ENCODE measurements at regions of chr1 and their contacts with region 1.

Region 1: DNA sequence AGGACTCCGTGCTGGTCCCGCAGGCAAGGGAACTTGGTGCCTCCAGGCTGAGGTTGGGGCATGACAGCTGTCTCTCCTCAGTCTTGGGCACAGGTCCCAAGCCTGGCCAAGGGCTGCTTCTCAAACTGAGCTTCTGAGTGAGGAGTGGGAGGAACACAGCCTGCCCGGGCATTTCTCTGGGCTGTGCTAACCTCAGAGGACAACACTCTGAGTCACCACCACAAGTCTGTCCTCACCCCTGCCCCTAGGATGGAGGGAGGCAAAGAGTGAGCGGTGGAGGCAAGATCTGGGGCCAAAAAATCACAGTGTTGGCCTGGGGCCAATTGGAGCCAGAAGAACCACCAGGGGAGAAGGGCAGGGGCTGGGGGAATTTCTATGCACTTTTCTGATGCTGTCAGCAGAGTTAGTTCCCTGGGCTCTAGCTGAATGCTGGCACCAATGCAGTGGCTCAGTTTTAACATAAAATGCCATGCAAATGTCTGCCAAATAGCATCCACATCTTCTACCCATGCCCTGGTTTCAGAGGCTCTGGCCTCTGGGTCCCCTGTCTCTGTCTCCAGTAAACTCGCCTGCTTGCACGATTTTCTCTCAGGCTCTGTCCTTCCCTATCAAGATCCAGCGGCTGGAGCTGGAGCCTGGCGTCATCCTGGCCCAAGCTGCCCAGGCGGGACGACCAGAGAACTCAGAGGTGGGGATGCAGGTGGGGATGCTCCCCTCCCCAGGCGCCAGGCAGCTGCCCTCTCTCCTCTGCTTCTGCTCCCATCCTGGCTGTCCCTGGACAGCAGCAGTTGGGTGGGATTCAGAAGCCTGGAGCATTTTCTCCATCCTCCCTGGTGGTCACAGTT is 11.0 kb upstream of the CDK18 start:
- DNase-seq: no peak
- H3K4me3 ChIP-seq: no peak overlapping the region
- H3K27ac ChIP-seq: no peak overlapping the region
- H3K4me1 ChIP-seq: peaks cover 10 to 23% (median 16%) of the 10 kb centered on the region in 4 experiments
- H3K27me3 ChIP-seq: no peaks in the 10 kb centered on the region
- CTCF ChIP-seq: no peak
- EP300 ChIP-seq: no peak
- POLR2A ChIP-seq: no peak
- RAD21 ChIP-seq: no peak

Region 2: DNA sequence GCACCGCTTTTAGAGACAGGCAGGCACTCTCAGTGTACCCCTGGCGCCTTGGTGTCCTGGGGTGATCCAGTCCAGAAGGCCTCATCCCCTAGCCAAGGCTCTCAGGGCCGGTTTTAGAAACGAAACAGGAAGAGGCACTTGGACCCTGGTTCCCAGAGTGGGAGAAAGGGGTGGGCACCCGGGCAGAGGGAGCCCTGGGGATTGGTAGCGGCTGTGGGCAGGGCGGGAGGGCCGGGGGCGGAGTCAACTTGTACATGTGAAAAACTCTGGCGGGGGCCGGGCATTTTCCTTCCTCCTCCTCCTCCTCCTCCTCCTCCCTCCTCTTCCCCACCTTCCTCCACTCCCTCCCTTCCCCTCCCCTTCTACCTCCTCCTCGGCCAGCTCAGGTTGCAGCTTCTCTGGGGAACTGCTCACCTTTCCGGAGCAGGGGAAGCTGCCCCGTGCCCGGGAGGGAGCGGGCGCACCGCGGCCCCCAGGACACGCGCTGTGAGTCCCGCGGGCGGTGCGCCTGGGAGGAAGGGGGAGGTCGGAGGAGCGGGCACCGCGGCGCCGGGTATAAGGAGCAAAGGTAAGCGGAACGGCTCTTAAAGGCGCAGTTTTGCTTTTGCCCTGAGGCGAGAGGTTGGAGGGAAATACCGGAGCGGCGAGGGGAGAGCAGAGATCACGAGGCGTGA is 11.0 kb after region 1 on chr1 and contains the start of gene CDK18:
- CTCF ChIA-PET with region 1: interaction called, 1,626 read pairs
- POLR2A ChIA-PET with region 1: interaction called, 22 read pairs
- DNase-seq: peak; percentile 69 to 85
- H3K4me3 ChIP-seq: peak within 1 kb of the TSS; percentile 44 to 88 (median 86)
- H3K27ac ChIP-seq: peak within 1 kb of the TSS; percentile 49; the same call in 1 of the 2 replicates
- H3K4me1 ChIP-seq: peaks cover 0 to 29% (median 16%) of the 10 kb centered on the region in 4 experiments; a peak in 6 of 7 replicates
- H3K27me3 ChIP-seq: no peaks in the 10 kb centered on the region
- CTCF ChIP-seq: no peak
- EP300 ChIP-seq: no peak; a peak in 1 of 3 replicates
- POLR2A ChIP-seq: peak in 1 of 2 experiments; percentile 66; a peak in 1 of 3 replicates
- RAD21 ChIP-seq: no peak
- total RNA-seq, gene CDK18: 40.9 and 44.0 TPM in 2 replicates